ENCODE measurements at regions of chr6 and their contacts with region 1.

Region 1: GRCh38 chr6:132962936-132963868 is 148.8 kb downstream of the RPS12 start:
- ATAC-seq: peak in 4 of 8 experiments; percentile 13 to 72 (median 60)
- H3K4me3 ChIP-seq: no peak overlapping the region
- H3K27ac ChIP-seq: no peak overlapping the region
- H3K4me1 ChIP-seq: no peaks in the 10 kb centered on the region

Region 2: DNA sequence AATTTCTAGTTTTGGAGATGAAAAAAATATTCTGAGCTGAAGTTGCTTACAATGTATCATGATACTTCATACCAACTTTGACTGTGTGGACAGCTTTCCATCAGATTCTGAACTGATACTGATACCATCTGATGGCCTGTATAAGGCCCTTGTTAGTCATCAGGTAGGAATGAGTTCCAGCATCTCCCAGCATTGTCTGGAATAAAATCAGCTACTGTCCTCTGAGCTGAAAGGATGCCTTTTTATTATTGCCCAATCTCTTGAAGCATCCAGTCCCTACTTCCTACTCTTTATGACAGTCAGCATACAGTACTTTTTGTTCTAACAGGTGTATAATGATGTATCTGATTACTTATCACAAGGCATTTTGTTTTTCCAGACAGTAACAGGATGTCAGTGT is 207.4 kb after region 1 on chr6:
- in situ Hi-C with region 1: loop called in 1 of 9 experiments (anchors 25 kb)
- ATAC-seq: peak in 1 of 8 experiments; percentile 40
- H3K4me3 ChIP-seq: no peak overlapping the region
- H3K27ac ChIP-seq: no peak overlapping the region
- H3K4me1 ChIP-seq: peaks cover 0 to 2% of the 10 kb centered on the region in 2 donors

Region 3: GRCh38 chr6:133306931-133307330 is 343.7 kb after region 1 on chr6:
- in situ Hi-C with region 1: no loop called
- ATAC-seq: peak in 1 of 8 experiments; percentile 24
- H3K4me3 ChIP-seq: no peak overlapping the region
- H3K27ac ChIP-seq: no peak overlapping the region
- H3K4me1 ChIP-seq: no peaks in the 10 kb centered on the region

Measured in motor neuron (in vitro differentiated cells).